Panc1 (cell line): ENCODE measurements at regions of chr15 and their contacts with region 1.

Region 1: DNA sequence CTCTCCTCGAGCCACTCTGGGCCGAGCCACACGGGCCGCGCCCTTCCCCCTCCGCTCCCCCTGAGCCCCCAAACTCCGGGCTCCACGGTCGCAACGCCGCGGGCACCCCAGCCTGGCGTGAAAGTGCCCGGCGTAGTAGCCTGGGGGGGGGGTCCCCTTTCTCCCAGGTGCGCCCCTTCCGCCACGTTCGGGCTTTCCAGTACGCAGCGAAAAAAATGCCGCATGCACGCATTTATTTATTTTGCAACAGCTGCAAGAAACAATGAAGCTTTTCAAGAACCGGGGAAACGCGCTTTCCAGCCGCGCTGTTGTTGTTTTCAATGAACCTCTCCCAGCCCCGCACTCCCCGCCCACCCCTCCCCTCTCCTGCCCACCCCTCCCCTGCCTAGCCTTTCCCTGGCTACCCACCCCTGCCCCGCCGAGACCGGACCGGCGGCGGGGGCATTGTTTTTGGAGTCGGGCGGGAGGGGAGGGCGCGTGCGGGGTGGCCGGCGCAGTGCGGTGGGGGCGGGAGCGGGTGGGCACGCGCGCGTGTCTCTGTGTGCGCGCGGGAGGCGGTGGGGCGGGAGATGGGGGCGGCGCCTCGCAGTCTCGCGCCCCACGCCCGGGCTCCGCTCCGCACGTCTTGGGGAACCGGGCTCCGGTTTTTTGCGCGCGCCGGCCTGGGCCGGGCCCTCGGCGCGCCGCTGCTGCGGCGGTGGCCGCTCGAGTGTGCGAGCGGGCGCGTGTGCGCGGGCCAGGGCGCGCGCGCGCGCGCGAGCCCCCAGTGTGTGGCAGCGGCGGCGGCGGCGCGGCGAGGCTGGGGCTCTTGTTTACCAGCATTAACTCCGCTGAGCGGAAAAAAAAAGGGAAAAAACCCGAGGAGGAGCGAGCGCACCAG is at the start of gene IGF1R:
- DNase-seq: no peak
- ATAC-seq: peak; percentile 73
- H3K4me3 ChIP-seq: peak within 1 kb of the TSS; percentile 85 to 87
- H3K27ac ChIP-seq: peak within 1 kb of the TSS; percentile 75
- H3K4me1 ChIP-seq: peaks cover 28% of the 10 kb centered on the region
- H3K27me3 ChIP-seq: 0 out of 2 replicates have a peak, but pooled peaks cover 2% of the 10 kb centered on the region
- CTCF ChIP-seq: peak; percentile 70
- total RNA-seq, gene IGF1R: 77.1 TPM

Region 2: GRCh38 chr15:98442379-98442833 is 205.6 kb before region 1 on chr15:
- CTCF ChIA-PET with region 1: no interaction called
- POLR2A ChIA-PET with region 1: no interaction called
- in situ Hi-C with region 1: no loop called
- intact Hi-C with region 1: loop called (anchors 5 kb)
- DNase-seq: peak; percentile 36
- ATAC-seq: peak; percentile 81
- H3K4me3 ChIP-seq: no peak overlapping the region
- H3K27ac ChIP-seq: no peak overlapping the region
- H3K4me1 ChIP-seq: peaks cover 8% of the 10 kb centered on the region
- H3K27me3 ChIP-seq: no peaks in the 10 kb centered on the region
- CTCF ChIP-seq: peak; percentile 92

Region 3: DNA sequence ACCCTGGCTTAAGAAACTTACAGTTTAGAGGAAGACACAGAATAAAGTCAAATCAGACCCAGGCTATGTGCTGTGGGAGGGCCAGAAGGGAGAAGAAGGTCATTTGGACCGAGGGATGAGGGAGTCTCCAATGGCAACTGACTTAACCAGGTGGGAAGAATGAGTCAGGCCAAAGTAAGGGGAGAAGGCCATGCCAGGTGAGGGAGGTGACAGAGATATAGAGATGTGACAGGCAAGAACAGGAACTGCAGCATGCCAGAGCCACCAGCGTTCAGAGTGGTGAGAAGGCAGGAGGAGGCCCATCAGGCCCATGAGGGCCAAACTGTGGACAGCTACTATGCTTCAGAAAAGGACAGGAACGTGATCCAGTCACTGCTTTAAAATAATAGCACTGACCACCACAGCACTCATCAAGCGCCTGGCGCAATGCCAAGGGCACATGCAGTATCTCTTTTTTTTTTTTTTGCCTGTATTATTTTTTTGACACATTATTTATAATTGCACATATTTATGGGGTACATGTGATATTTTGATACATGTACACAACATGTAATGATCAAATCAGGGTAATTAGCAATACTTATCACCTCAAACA is 154.0 kb before region 1 on chr15:
- CTCF ChIA-PET with region 1: no interaction called
- POLR2A ChIA-PET with region 1: no interaction called
- in situ Hi-C with region 1: no loop called
- intact Hi-C with region 1: no loop called
- DNase-seq: no peak
- ATAC-seq: no peak; the same call in 1 of the 2 replicates
- H3K4me3 ChIP-seq: no peak overlapping the region
- H3K27ac ChIP-seq: no peak overlapping the region
- H3K4me1 ChIP-seq: no peaks in the 10 kb centered on the region
- H3K27me3 ChIP-seq: no peaks in the 10 kb centered on the region
- CTCF ChIP-seq: no peak

Region 4: GRCh38 chr15:98518823-98519561 is 129.0 kb before region 1 on chr15:
- CTCF ChIA-PET with region 1: interaction called, 11 read pairs
- POLR2A ChIA-PET with region 1: no interaction called
- in situ Hi-C with region 1: no loop called
- intact Hi-C with region 1: no loop called
- DNase-seq: peak; percentile 33
- ATAC-seq: peak; percentile 95
- H3K4me3 ChIP-seq: no peak overlapping the region
- H3K27ac ChIP-seq: peak overlapping the region; percentile 41; the same call in 1 of the 2 replicates
- H3K4me1 ChIP-seq: peaks cover 8% of the 10 kb centered on the region
- H3K27me3 ChIP-seq: no peaks in the 10 kb centered on the region
- CTCF ChIP-seq: peak; percentile 94

Region 5: DNA sequence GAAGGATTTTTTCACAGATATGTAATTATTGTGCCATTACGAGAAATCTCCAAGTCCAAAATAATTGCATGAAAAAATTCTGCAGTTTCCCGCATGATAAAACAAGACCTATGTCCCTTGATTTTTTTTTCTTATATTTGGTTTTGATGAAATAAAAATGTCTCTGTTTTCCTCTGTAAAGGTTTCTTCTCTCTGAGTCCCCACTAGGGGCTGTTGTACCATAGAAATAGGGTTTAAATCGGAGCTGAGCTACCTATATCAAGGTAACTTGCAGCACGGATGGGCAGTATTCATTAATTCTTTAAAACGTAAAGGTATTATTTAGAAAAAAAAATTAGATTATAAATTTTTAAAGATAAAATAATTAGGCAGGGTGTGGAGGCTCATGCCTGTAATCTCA is 66.3 kb before region 1 on chr15:
- CTCF ChIA-PET with region 1: no interaction called
- POLR2A ChIA-PET with region 1: no interaction called
- in situ Hi-C with region 1: no loop called
- intact Hi-C with region 1: loop called (anchors 5 kb)
- DNase-seq: no peak
- ATAC-seq: peak; percentile 67; the same call in 1 of the 2 replicates
- H3K4me3 ChIP-seq: no peak overlapping the region
- H3K27ac ChIP-seq: no peak overlapping the region
- H3K4me1 ChIP-seq: 0 out of 2 replicates have a peak, but pooled peaks cover 6% of the 10 kb centered on the region
- H3K27me3 ChIP-seq: peaks cover 7% of the 10 kb centered on the region
- CTCF ChIP-seq: peak; percentile 59; the same call in 1 of the 2 replicates

Region 6: GRCh38 chr15:98850961-98851573 is 203.1 kb after region 1 on chr15:
- CTCF ChIA-PET with region 1: interaction called, 6 read pairs
- POLR2A ChIA-PET with region 1: no interaction called
- in situ Hi-C with region 1: no loop called
- intact Hi-C with region 1: loop called (anchors 1 kb)
- DNase-seq: no peak
- ATAC-seq: peak; percentile 82
- H3K4me3 ChIP-seq: peak overlapping the region in 1 of 2 experiments; percentile 90; a peak in 2 of 4 replicates
- H3K27ac ChIP-seq: peak overlapping the region; percentile 86
- H3K4me1 ChIP-seq: peaks cover 74% of the 10 kb centered on the region
- H3K27me3 ChIP-seq: no peaks in the 10 kb centered on the region
- CTCF ChIP-seq: peak; percentile 91